Naive thymus-derived CD4-positive, alpha-beta T cell (primary cell): ENCODE measurements at regions of chr15 and their contacts with region 1.

Region 1: DNA sequence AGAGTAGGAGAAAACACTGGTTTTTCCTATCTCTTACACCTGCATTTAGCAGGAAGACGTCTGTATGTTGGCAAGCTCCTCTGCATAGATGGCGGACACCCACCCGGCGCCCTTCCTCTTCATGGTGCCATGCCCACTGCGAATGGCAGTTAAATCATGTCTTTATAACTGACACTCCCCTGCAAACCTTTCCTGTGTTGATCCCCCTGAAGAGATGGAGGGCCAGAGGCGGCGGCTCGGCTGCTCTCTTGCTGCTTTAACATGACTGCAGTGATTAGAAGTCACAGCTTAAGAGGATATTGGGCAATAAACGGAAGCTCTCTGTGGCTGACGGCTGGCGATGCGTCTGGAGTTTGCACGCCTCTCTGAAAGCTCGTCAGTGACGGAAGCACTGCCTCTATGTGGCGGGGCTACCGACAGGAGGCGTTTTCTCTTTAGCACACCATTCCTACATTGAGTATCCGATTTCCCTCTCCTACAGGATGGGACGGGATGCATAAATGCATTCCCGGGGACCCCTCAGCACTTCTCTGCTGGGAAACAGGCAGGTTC is 25.5 kb upstream of the SNRPA1 start:
- DNase-seq: peak; percentile 32 to 75 (median 61)
- ATAC-seq: peak; percentile 96
- H3K4me3 ChIP-seq: peak overlapping the region; percentile 68
- H3K4me3 Mint-ChIP-seq: peak overlapping the region; percentile 68 to 91 (median 86)
- H3K27ac ChIP-seq: peak overlapping the region; percentile 55
- H3K27ac Mint-ChIP-seq: peak overlapping the region; percentile 88 to 97 (median 94)
- H3K4me1 ChIP-seq: peaks cover 5 to 8% of the 10 kb centered on the region in 2 donors
- H3K4me1 Mint-ChIP-seq: peaks cover 13 to 14% (median 14%) of the 10 kb centered on the region in 7 donors
- H3K27me3 ChIP-seq: no peaks in the 10 kb centered on the region
- H3K27me3 Mint-ChIP-seq: peaks cover 2 to 20% (median 9%) of the 10 kb centered on the region in 5 donors

Region 2: GRCh38 chr15:101251830-101252820 is 68.5 kb before region 1 on chr15 and contains the start of gene CHSY1:
- CTCF ChIA-PET with region 1: no interaction called
- POLR2A ChIA-PET with region 1: no interaction called
- intact Hi-C with region 1: no loop called
- DNase-seq: peak; percentile 71 to 91 (median 81)
- ATAC-seq: peak; percentile 91
- H3K4me3 ChIP-seq: peak within 1 kb of the TSS; percentile 64
- H3K4me3 Mint-ChIP-seq: peak within 1 kb of the TSS; percentile 84 to 97 (median 94)
- H3K27ac ChIP-seq: peak within 1 kb of the TSS; percentile 62
- H3K27ac Mint-ChIP-seq: peak within 1 kb of the TSS; percentile 77 to 96 (median 84)
- H3K4me1 ChIP-seq: peaks cover 17 to 21% of the 10 kb centered on the region in 2 donors
- H3K4me1 Mint-ChIP-seq: peaks cover 17 to 63% (median 37%) of the 10 kb centered on the region in 7 donors
- H3K27me3 ChIP-seq: no peaks in the 10 kb centered on the region
- H3K27me3 Mint-ChIP-seq: no peaks in the 10 kb centered on the region
- total RNA-seq, gene CHSY1: 8.9 to 47.0 (median 10.8) TPM

Region 3: DNA sequence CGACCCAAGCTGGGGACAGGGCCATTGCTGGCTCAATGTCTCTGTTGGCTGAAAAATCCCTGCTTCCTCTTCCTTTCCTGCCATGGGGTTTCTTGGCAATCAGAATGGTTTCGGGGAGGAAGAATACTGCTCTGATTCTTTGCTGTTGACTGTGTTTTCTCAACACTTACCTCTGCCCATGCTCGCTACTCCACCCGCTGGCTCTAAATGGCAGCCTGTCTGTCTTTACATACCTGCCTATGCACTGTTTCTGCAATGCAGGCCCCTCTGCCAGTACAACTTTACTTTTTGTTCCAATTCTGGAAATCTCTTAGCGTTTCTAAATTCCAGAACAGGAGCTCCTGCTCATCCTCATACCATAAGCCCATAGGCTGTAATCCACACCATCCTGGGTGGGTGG is 12.8 kb after region 1 on chr15:
- CTCF ChIA-PET with region 1: interaction called, 5 read pairs
- POLR2A ChIA-PET with region 1: interaction called, 7 read pairs
- intact Hi-C with region 1: loop called (anchors 1 kb)
- DNase-seq: no peak
- ATAC-seq: no peak
- H3K4me3 ChIP-seq: peak overlapping the region; percentile 14
- H3K4me3 Mint-ChIP-seq: peak overlapping the region in 3 of 10 donors; percentile 28 to 67 (median 38)
- H3K27ac ChIP-seq: peak overlapping the region; percentile 47
- H3K27ac Mint-ChIP-seq: peak overlapping the region in 8 of 9 donors; percentile 74 to 97 (median 90)
- H3K4me1 ChIP-seq: peaks cover 14 to 18% of the 10 kb centered on the region in 2 donors
- H3K4me1 Mint-ChIP-seq: peaks cover 0 to 28% (median 24%) of the 10 kb centered on the region in 7 donors
- H3K27me3 ChIP-seq: no peaks in the 10 kb centered on the region
- H3K27me3 Mint-ChIP-seq: peaks cover 0 to 8% (median 6%) of the 10 kb centered on the region in 5 donors